H1 (cell line): ENCODE measurements at regions of chr16 and their contacts with region 1.

Region 1: DNA sequence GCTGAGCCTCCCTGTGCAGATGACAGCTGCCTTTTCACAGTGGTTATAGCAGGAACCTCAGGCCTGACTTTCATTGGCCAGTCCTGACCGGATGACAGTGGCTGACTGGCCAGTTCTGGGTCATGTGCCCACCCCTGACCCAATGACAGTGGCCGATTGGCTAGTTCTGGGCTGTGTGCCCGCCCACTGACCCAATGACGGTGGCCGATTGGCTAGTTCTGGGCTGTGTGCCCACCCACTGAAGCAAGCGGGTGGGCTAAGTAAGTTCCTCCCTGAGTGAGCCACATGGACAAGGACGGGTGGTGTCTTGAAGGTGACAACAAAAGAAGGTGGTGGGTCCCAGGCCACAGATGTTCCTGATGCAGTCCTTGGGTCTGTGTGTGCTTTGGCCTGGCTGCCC is 9.5 kb downstream of the DEF8 start:
- DNase-seq: peak in 1 of 2 experiments; percentile 77
- H3K4me3 ChIP-seq: no peak overlapping the region
- H3K27ac ChIP-seq: no peak overlapping the region
- H3K4me1 ChIP-seq: peaks cover 0 to 3% (median 0%) of the 10 kb centered on the region in 4 experiments; a peak in 4 of 7 replicates
- H3K27me3 ChIP-seq: no peaks in the 10 kb centered on the region
- CTCF ChIP-seq: no peak
- EP300 ChIP-seq: no peak
- POLR2A ChIP-seq: no peak
- RAD21 ChIP-seq: no peak

Region 2: DNA sequence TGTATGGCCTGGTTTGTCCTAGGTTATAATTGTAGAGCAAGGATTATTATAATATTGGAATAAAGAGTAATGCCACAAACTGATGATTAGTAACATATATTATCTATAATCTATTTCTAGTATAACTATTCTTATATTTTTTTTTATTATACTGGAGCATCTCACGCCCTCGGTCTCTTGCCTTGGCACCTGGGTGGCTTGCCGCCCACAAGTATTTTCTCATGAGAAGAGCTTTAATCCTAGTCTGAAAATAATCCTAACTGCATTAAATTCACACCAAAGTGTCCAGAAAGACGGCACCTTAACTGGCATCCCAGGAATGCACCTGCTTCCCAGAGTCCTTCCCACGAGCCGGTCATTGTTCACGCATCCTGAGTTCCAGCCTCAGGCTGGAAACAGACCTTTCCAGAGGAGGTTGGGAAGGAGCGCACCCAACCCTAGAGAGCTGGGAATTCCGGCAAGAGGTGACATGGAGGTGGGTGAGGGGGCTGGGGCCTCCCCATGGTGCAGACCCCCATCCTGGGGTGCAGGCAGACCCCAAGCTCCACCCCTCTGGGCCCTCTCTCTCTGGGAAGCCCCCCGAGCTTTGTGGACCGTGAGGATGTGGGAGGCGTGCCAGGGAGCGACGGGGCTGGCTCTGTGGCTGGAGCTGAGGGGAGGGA is 316.5 kb before region 1 on chr16:
- CTCF ChIA-PET with region 1: no interaction called
- POLR2A ChIA-PET with region 1: no interaction called
- DNase-seq: no peak
- H3K4me3 ChIP-seq: no peak overlapping the region
- H3K27ac ChIP-seq: no peak overlapping the region
- H3K4me1 ChIP-seq: no peaks in the 10 kb centered on the region
- H3K27me3 ChIP-seq: no peaks in the 10 kb centered on the region
- CTCF ChIP-seq: no peak
- EP300 ChIP-seq: no peak
- POLR2A ChIP-seq: no peak
- RAD21 ChIP-seq: no peak

Region 3: DNA sequence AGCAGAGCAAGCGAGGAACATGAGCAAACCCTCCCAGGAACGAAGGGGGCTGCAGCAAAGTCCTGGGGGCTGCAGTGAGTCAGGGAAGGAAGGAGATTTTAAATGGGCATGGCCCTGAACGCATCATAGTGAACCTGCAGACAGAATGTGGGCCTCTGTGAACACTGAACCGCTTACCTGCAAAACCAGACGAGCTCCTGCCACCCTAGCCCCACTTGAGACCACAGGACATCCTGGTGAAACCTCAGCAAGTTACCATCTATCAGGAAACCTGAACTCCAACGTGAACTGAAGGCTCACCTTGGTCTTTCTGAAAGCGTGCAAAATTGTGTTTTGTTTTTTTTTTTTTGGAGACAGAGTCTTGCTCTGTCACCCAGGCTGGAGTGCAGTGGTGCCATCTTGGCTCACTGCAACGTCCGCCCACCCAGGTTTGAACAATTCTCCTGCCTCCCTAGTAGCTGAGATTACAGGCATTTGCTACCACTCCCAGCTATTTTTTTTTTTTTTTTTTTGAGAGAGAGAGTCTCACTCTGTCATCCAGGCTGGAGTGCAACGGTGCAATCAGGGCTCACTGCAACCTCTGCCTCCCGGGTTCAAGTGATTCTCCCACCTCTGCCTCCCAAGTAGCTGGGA is 172.4 kb before region 1 on chr16:
- CTCF ChIA-PET with region 1: no interaction called
- POLR2A ChIA-PET with region 1: no interaction called
- DNase-seq: no peak
- H3K4me3 ChIP-seq: no peak overlapping the region
- H3K27ac ChIP-seq: no peak overlapping the region
- H3K4me1 ChIP-seq: no peaks in the 10 kb centered on the region
- H3K27me3 ChIP-seq: no peaks in the 10 kb centered on the region
- CTCF ChIP-seq: no peak
- EP300 ChIP-seq: no peak
- POLR2A ChIP-seq: no peak
- RAD21 ChIP-seq: no peak

Region 4: GRCh38 chr16:89873972-89874689 is 83.9 kb before region 1 on chr16:
- CTCF ChIA-PET with region 1: no interaction called
- POLR2A ChIA-PET with region 1: no interaction called
- DNase-seq: peak; percentile 92 to 98
- H3K4me3 ChIP-seq: peak overlapping the region; percentile 84 to 97 (median 90)
- H3K27ac ChIP-seq: peak overlapping the region; percentile 40; the same call in 1 of the 2 replicates
- H3K4me1 ChIP-seq: peaks cover 0 to 9% (median 2%) of the 10 kb centered on the region in 4 experiments; a peak in 4 of 7 replicates
- H3K27me3 ChIP-seq: no peaks in the 10 kb centered on the region
- CTCF ChIP-seq: no peak
- EP300 ChIP-seq: no peak
- POLR2A ChIP-seq: peak in 1 of 2 experiments; percentile 35; a peak in 1 of 3 replicates
- RAD21 ChIP-seq: no peak

Region 5: DNA sequence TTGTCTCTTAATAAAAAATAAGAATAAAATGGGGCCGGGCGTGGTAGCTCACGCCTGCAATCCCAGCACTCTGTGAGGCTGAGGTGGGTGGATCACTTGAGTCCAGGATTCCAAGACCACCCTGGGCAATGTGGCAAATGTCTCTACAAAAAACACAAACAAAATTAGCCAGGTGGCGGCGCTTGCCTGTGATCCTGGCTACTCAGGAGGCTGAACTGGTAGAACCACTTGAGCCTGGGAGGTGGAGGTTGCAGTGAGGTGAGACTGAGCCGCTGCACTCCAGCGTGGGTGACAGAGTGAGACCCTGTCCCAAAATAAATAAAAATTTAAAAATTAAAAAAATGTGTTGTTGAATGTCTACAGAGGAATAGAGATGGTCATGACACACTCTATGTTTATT is 12.4 kb before region 1 on chr16:
- CTCF ChIA-PET with region 1: interaction called, 12 read pairs
- POLR2A ChIA-PET with region 1: interaction called, 5 read pairs
- DNase-seq: no peak
- H3K4me3 ChIP-seq: no peak overlapping the region
- H3K27ac ChIP-seq: no peak overlapping the region
- H3K4me1 ChIP-seq: peaks cover 0 to 7% (median 5%) of the 10 kb centered on the region in 4 experiments; a peak in 5 of 7 replicates
- H3K27me3 ChIP-seq: peaks cover 3 to 28% (median 22%) of the 10 kb centered on the region in 4 experiments
- CTCF ChIP-seq: peak in 2 of 3 experiments; percentile 9 to 11; a peak in 3 of 4 replicates
- EP300 ChIP-seq: no peak
- POLR2A ChIP-seq: no peak
- RAD21 ChIP-seq: peak in 1 of 2 experiments; percentile 28; a peak in 1 of 4 replicates

Region 6: GRCh38 chr16:89972244-89973234 is 14.5 kb after region 1 on chr16:
- CTCF ChIA-PET with region 1: interaction called, 6 read pairs
- POLR2A ChIA-PET with region 1: interaction called, 54 read pairs
- DNase-seq: peak; percentile 67 to 95
- H3K4me3 ChIP-seq: peak overlapping the region; percentile 77 to 97 (median 94)
- H3K27ac ChIP-seq: peak overlapping the region; percentile 99
- H3K4me1 ChIP-seq: peaks cover 0 to 8% (median 3%) of the 10 kb centered on the region in 4 experiments; a peak in 3 of 7 replicates
- H3K27me3 ChIP-seq: peaks cover 0 to 6% (median 0%) of the 10 kb centered on the region in 4 experiments; a peak in 2 of 7 replicates
- CTCF ChIP-seq: no peak
- EP300 ChIP-seq: no peak
- POLR2A ChIP-seq: peak; percentile 81 to 98
- RAD21 ChIP-seq: no peak

Region 7: GRCh38 chr16:90008708-90009535 is 50.9 kb after region 1 on chr16:
- CTCF ChIA-PET with region 1: no interaction called
- POLR2A ChIA-PET with region 1: no interaction called
- DNase-seq: no peak
- H3K4me3 ChIP-seq: no peak overlapping the region
- H3K27ac ChIP-seq: no peak overlapping the region
- H3K4me1 ChIP-seq: peaks cover 0 to 4% (median under 1%) of the 10 kb centered on the region in 4 experiments; a peak in 2 of 7 replicates
- H3K27me3 ChIP-seq: no peaks in the 10 kb centered on the region
- CTCF ChIP-seq: no peak
- EP300 ChIP-seq: no peak
- POLR2A ChIP-seq: no peak
- RAD21 ChIP-seq: no peak